Ovary (tissue), 10 donors: ENCODE measurements at regions of chr20 and their contacts with region 1.

Region 1: GRCh38 chr20:9978397-9979004 is 56.3 kb upstream of the ANKEF1 start:
- DNase-seq: peak in 4 of 5 donors; percentile 17 to 62 (median 28)
- H3K4me3 ChIP-seq: no peak overlapping the region
- H3K27ac ChIP-seq: no peak overlapping the region
- H3K4me1 ChIP-seq: peaks cover 3% of the 10 kb centered on the region
- H3K27me3 ChIP-seq: no peaks in the 10 kb centered on the region
- CTCF ChIP-seq: peak; percentile 70 to 92 (median 91)
- EP300 ChIP-seq: no peak
- POLR2A ChIP-seq: no peak

Region 2: GRCh38 chr20:10040070-10040975 is 61.8 kb after region 1 on chr20:
- intact Hi-C with region 1: no loop called
- DNase-seq: no peak
- H3K4me3 ChIP-seq: no peak overlapping the region
- H3K27ac ChIP-seq: no peak overlapping the region
- H3K4me1 ChIP-seq: no peaks in the 10 kb centered on the region
- H3K27me3 ChIP-seq: no peaks in the 10 kb centered on the region
- CTCF ChIP-seq: no peak
- EP300 ChIP-seq: no peak
- POLR2A ChIP-seq: no peak

Region 3: GRCh38 chr20:10079964-10080363 is 101.5 kb after region 1 on chr20:
- intact Hi-C with region 1: loop called in 1 of 4 experiments (anchors 10 kb)
- DNase-seq: no peak
- H3K4me3 ChIP-seq: no peak overlapping the region
- H3K27ac ChIP-seq: no peak overlapping the region
- H3K4me1 ChIP-seq: peaks cover 2% of the 10 kb centered on the region
- H3K27me3 ChIP-seq: no peaks in the 10 kb centered on the region
- CTCF ChIP-seq: no peak
- EP300 ChIP-seq: no peak
- POLR2A ChIP-seq: no peak

Region 4: DNA sequence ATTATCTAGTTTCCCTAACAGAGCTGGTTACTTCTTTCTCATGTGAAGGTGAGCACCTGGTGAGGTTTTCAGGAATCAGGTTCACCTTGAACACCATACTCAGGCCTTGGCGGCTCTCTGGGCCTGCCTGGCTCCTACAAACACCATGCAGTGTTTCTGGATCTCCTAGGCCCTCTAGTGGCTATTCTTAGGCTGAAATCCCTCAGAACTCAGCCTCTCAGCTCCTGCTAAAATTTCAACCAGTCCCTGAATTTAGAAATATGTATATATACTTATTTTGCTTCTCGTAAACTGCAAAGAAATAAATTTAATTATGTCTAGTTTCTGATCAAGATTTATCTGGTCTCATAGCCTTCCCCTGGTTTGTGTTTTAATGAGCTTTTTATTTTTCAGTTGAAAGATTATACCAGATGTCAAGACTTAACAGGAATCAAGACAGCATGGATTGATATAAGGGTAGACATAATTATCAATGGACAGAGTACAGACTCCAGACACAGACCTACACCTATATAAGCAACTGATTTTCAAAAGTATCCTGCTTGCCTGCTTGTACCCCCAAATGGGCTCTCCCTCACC is 112.2 kb after region 1 on chr20:
- intact Hi-C with region 1: loop called (anchors 2 to 10 kb)
- DNase-seq: peak in 4 of 5 donors; percentile 29 to 53 (median 38)
- H3K4me3 ChIP-seq: no peak overlapping the region
- H3K27ac ChIP-seq: no peak overlapping the region
- H3K4me1 ChIP-seq: no peaks in the 10 kb centered on the region
- H3K27me3 ChIP-seq: no peaks in the 10 kb centered on the region
- CTCF ChIP-seq: peak; percentile 17 to 66 (median 46)
- EP300 ChIP-seq: no peak
- POLR2A ChIP-seq: no peak

Region 5: GRCh38 chr20:10412591-10413408 is 434.3 kb after region 1 on chr20:
- intact Hi-C with region 1: loop called in 2 of 4 experiments (anchors 10 kb)
- DNase-seq: no peak
- H3K4me3 ChIP-seq: no peak overlapping the region
- H3K27ac ChIP-seq: no peak overlapping the region
- H3K4me1 ChIP-seq: no peaks in the 10 kb centered on the region
- H3K27me3 ChIP-seq: no peaks in the 10 kb centered on the region
- CTCF ChIP-seq: no peak
- EP300 ChIP-seq: no peak
- POLR2A ChIP-seq: no peak

Region 6: DNA sequence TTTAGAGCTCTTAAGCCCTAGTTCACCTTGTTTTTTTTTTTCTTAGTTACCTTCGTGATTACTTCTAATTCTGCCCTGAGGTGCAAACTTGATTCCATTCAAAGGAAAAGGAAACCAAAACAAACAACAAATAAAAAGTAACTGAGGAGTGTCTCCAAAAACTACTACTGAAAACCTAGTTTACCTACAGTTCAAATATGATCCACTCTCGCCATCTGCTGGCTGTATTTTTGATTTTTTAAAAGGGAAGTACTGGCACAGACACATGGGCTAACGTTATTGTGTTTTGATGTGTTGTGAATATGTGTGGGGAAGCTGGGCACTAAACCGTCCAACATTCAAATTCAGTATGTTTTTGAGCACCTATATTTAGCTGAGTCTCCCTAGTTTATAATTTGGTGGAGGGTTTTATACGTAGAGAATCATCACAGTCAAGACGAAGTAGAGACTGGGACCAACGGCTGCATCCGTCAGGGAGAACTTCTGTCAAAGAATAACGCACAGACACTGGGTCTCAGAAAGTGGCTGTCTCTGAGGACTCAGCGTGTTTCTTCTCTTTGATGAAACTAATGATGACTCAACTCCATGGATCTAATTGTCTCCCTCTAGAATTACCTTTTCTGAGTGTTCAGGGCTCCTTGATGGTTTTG is 1565.7 kb after region 1 on chr20:
- intact Hi-C with region 1: loop called in 2 of 4 experiments (anchors 10 kb)
- DNase-seq: peak in 1 of 5 donors; percentile 44
- H3K4me3 ChIP-seq: no peak overlapping the region
- H3K27ac ChIP-seq: no peak overlapping the region
- H3K4me1 ChIP-seq: no peaks in the 10 kb centered on the region
- H3K27me3 ChIP-seq: no peaks in the 10 kb centered on the region
- CTCF ChIP-seq: peak; percentile 41 to 71 (median 65)
- EP300 ChIP-seq: no peak
- POLR2A ChIP-seq: no peak